ENCODE measurements at regions of chr1 and their contacts with region 1.

Region 1: DNA sequence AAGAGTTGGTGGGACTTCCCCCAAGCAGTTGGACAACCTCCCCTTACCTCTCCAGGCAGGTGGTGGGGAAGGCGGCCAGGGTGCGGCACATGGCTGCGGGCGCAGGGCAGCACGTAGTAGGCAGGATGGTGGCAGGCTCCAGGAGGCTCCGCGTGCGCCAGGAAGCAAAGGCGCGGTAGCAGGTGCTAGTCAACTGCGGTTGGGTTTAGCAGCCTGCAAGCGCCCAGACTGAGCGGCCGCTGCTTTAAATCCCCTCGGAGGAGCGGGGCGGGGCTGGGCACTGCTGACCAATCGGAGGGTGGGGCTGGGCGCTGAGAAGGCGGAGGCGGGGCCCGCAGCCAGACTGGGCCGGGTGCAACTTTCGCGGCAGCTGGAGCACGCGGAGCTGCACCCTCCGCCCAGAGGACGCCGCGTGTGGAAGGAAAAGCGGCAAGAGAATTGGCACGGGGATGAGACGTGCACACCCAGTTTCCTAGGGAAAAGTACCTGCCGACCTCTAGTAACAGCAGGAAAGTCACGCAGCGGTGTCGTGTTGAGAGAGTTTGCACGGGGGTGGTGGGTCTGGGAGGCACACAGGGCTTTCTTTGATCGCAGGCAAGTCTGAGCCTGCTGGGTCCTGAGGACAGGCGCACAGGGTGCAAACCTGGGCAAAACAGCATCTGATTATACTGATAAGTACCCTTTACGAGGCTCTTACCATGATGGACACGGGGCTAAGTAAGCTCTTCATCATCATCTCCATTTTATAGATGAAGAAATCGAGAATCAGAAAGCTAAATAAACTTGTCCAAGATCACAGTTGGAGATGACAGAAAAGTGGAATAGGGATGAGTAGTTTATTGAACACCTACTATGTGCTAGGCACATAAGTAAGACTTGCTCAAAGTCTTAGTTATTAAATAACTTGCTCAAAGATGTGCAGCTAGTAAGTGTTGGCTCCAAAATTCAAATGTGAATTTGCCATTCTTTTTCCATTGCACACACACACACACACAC is at the start of gene RGS16:
- DNase-seq: peak; percentile 81 to 89 (median 82)
- H3K4me3 ChIP-seq: peak within 1 kb of the TSS; percentile 36 to 39
- H3K4me3 Mint-ChIP-seq: peak within 1 kb of the TSS in 7 of 8 donors; percentile 81 to 91 (median 85)
- H3K27ac ChIP-seq: peak within 1 kb of the TSS; percentile 46
- H3K27ac Mint-ChIP-seq: peak within 1 kb of the TSS in 5 of 7 donors; percentile 36 to 95 (median 73)
- H3K4me1 ChIP-seq: peaks cover 41% of the 10 kb centered on the region
- H3K4me1 Mint-ChIP-seq: peaks cover 0 to 20% (median 12%) of the 10 kb centered on the region in 4 donors
- H3K27me3 ChIP-seq: no peaks in the 10 kb centered on the region
- H3K27me3 Mint-ChIP-seq: no peaks in the 10 kb centered on the region
- total RNA-seq, gene RGS16: 1.3 to 1.4 TPM

Region 2: DNA sequence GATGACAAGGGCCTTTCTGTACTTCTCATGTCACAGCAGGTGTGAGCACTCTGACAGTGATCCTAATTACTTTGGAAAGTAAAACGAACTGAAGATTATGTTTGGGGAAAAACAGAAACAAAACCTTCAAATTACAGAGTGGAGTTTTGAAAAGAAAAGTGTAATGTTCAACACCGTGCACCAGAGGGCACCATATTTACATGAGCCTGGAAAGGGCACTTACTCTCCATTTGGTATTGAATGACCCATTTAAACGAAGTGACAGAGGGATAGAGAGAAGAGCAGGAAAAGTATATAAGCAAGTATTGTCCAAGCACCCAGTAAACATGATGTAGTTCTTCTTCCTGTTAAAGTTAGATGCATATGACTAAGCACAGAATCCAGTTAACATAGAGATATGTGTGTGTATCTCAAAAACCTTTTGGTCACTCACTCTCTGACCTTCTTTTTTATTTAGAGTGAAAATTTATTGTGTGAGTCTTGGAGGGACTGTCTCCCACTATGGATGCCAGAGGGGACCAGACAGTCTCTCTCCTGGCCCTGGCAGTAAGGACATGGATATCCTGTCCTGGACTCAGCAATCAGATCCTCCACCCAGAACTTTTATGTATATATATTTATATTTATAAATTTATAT is 158.3 kb before region 1 on chr1:
- CTCF ChIA-PET with region 1: interaction called, 5 read pairs
- POLR2A ChIA-PET with region 1: no interaction called
- intact Hi-C with region 1: loop called (anchors 5 kb)
- DNase-seq: peak in 4 of 5 donors; percentile 6 to 25 (median 16)
- H3K4me3 ChIP-seq: no peak overlapping the region
- H3K4me3 Mint-ChIP-seq: no peak overlapping the region
- H3K27ac ChIP-seq: no peak overlapping the region
- H3K27ac Mint-ChIP-seq: no peak overlapping the region
- H3K4me1 ChIP-seq: no peaks in the 10 kb centered on the region
- H3K4me1 Mint-ChIP-seq: peaks cover 0 to 5% (median 3%) of the 10 kb centered on the region in 4 donors
- H3K27me3 ChIP-seq: no peaks in the 10 kb centered on the region
- H3K27me3 Mint-ChIP-seq: peaks cover 2 to 4% of the 10 kb centered on the region in 2 donors

Region 3: GRCh38 chr1:182614796-182615454 is 10.5 kb after region 1 on chr1:
- CTCF ChIA-PET with region 1: interaction called, 14 read pairs
- POLR2A ChIA-PET with region 1: interaction called, 77 read pairs
- intact Hi-C with region 1: loop called (anchors 1 kb)
- DNase-seq: peak in 4 of 5 donors; percentile 33 to 60 (median 34)
- H3K4me3 ChIP-seq: peak overlapping the region; percentile 46 to 73
- H3K4me3 Mint-ChIP-seq: peak overlapping the region; percentile 79 to 90 (median 86)
- H3K27ac ChIP-seq: peak overlapping the region; percentile 0
- H3K27ac Mint-ChIP-seq: peak overlapping the region; percentile 76 to 96 (median 95)
- H3K4me1 ChIP-seq: peaks cover 41% of the 10 kb centered on the region
- H3K4me1 Mint-ChIP-seq: peaks cover 30 to 47% (median 33%) of the 10 kb centered on the region in 4 donors
- H3K27me3 ChIP-seq: no peaks in the 10 kb centered on the region
- H3K27me3 Mint-ChIP-seq: peaks cover 2 to 15% of the 10 kb centered on the region in 2 donors

Region 4: DNA sequence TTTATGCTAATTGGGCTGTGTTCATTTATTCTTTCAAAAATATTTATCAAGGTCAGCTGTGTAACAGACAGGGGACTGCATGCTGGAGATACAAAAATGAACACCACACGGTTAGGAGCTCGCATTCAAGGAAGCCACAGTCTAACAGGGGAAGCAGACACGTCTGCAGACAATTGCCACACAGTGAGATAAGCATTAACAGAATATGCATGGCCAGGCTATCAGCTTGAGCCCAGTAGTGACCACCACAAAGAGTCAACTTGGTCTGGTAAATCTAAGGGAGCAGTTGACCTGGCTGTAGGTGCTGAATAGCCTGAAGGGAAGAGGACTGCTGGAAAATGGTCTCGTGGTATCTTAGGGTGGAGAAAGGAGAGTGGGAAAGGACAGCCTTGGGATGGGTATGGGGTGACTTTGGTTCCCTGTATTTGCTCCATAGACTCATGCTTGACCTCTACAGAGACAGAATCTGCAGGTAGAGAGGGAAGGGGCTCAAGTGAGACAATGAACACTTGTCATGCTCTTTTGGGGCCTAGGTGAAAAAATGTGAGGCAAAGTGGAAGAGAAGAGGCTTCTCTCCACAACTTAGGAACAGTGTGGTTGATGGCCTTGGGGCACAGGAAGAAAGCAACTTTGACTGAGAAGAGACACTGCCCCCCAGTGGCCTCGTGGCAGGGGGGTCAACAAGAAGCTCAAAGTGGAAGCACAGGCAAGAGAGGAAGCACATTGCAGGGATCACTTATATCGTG is 177.5 kb after region 1 on chr1:
- CTCF ChIA-PET with region 1: interaction called, 707 read pairs
- POLR2A ChIA-PET with region 1: interaction called, 15 read pairs
- intact Hi-C with region 1: loop called (anchors 1 kb)
- DNase-seq: peak; percentile 53 to 64 (median 59)
- H3K4me3 ChIP-seq: no peak overlapping the region
- H3K4me3 Mint-ChIP-seq: no peak overlapping the region
- H3K27ac ChIP-seq: no peak overlapping the region
- H3K27ac Mint-ChIP-seq: peak overlapping the region in 1 of 7 donors; percentile 40
- H3K4me1 ChIP-seq: no peaks in the 10 kb centered on the region
- H3K4me1 Mint-ChIP-seq: peaks cover 3 to 6% (median 4%) of the 10 kb centered on the region in 4 donors
- H3K27me3 ChIP-seq: no peaks in the 10 kb centered on the region
- H3K27me3 Mint-ChIP-seq: no peaks in the 10 kb centered on the region

Region 5: GRCh38 chr1:182839209-182840065 is 235.0 kb after region 1 on chr1 and contains the start of gene DHX9:
- CTCF ChIA-PET with region 1: interaction called, 5 read pairs
- POLR2A ChIA-PET with region 1: interaction called, 3 read pairs
- intact Hi-C with region 1: loop called (anchors 1 kb)
- DNase-seq: peak; percentile 95 to 99 (median 96)
- H3K4me3 ChIP-seq: peak within 1 kb of the TSS; percentile 44 to 69
- H3K4me3 Mint-ChIP-seq: peak within 1 kb of the TSS; percentile 88 to 99 (median 96)
- H3K27ac ChIP-seq: peak within 1 kb of the TSS; percentile 81
- H3K27ac Mint-ChIP-seq: peak within 1 kb of the TSS; percentile 89 to 100 (median 98)
- H3K4me1 ChIP-seq: peaks cover 38% of the 10 kb centered on the region
- H3K4me1 Mint-ChIP-seq: peaks cover 34 to 57% (median 42%) of the 10 kb centered on the region in 4 donors
- H3K27me3 ChIP-seq: no peaks in the 10 kb centered on the region
- H3K27me3 Mint-ChIP-seq: no peaks in the 10 kb centered on the region
- total RNA-seq, gene DHX9: 222 TPM

Region 6: GRCh38 chr1:183635606-183636333 is 1031.3 kb after region 1 on chr1 and contains the start of gene ARPC5:
- CTCF ChIA-PET with region 1: no interaction called
- POLR2A ChIA-PET with region 1: no interaction called
- intact Hi-C with region 1: loop called (anchors 10 kb)
- DNase-seq: peak; percentile 94 to 95 (median 94)
- H3K4me3 ChIP-seq: peak within 1 kb of the TSS; percentile 72 to 88
- H3K4me3 Mint-ChIP-seq: peak within 1 kb of the TSS; percentile 100
- H3K27ac ChIP-seq: peak within 1 kb of the TSS; percentile 81
- H3K27ac Mint-ChIP-seq: peak within 1 kb of the TSS; percentile 92 to 100 (median 99)
- H3K4me1 ChIP-seq: peaks cover 44% of the 10 kb centered on the region
- H3K4me1 Mint-ChIP-seq: peaks cover 26 to 54% (median 36%) of the 10 kb centered on the region in 4 donors
- H3K27me3 ChIP-seq: no peaks in the 10 kb centered on the region
- H3K27me3 Mint-ChIP-seq: no peaks in the 10 kb centered on the region
- total RNA-seq, gene ARPC5: 106 to 107 TPM